ENCODE measurements at regions of chr19 and their contacts with region 1.

Region 1: DNA sequence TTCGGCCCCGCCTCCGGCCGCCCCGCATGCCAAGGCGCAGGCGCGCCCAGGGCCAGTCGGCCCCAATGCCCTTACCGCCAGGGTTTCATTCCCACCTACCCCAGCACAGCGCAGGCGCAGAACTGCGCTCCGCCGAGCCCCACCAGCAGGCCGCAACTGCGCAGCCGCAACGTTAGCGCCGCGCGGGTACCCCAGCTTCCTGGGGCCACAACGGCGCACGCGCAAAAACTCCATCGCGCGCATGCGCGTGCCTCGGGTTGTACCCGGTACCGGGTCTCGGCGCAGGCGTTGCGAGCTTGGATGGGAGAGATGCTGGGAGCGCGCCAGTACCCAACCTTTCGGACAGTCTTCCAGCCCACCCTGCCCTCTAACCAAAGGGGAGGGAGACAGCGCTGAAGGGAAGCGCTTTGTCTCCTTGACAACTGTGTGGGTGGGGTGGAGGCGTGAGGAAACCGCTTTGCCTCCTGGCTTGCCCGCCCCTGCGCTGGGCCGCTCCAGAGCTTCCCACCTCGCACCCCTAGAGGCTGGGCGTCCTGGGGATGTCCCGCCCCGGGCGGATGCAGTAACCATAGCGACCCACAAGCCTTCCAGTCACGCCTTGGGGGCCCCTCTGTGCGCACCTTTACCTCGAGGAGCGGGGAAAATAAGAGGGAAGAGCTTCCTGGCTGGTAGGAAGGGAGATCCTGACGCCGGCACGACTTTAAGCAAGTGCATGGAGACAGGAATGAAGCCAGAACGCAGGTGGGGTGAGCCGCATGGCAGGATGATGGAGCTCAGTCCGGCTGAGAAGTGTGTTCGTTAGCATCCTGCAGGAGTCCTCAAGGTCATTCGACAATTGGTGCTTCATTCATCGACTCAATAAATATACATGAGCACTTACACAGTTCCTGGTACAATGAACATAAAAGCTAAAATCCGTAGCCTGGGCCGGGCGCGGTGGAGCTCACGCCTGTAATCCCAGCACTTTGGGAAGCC is 525 bp upstream of the MYPOP start:
- H3K4me3 ChIP-seq: peak overlapping the region; percentile 75
- H3K27ac ChIP-seq: peak overlapping the region; percentile 63
- H3K4me1 ChIP-seq: peaks cover 9% of the 10 kb centered on the region; the same call in 1 of the 2 replicates
- CTCF ChIP-seq: peak; percentile 52

Region 2: DNA sequence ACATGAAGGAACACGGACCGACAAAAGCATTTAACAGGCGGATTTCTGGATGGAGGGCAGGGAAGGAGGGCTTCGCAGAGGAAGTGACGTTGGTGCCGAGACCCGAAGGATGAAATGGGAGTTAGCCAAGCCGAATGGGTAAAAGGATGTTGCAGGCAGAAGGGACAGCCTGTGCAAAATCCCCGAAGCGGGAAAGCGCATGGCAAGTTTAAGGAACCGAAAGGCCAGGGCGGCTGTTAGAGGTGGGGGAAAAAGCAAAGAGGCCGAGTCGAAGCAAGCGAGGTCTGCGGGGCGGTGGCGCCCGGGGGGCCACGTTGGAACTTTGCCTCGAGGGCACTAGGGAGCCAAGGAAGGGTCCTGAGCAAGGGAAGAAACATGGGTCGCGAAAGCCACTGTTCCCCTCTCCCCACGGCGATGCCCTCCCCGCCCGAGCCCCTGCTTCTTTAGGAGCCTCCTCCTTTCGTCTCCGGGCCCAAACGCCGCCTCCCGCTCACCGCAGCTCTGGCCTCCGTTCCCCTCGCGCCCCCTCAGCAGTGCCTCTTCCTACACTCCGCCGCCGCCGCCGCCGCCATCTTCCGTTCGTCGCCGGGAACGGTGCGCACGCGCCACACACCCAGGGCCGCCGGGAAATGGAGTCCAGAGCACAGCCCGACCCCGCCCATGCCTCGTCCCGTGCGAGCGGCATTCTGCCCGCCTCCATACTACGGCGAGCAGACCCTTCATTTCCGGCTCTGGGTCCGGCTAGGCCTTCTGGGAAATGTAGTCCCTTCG is 40.2 kb before region 1 on chr19 and contains the start of gene SYMPK:
- CTCF ChIA-PET with region 1: interaction called, 5 read pairs
- POLR2A ChIA-PET with region 1: interaction called, 25 read pairs
- H3K4me3 ChIP-seq: peak within 1 kb of the TSS; percentile 71
- H3K27ac ChIP-seq: peak within 1 kb of the TSS; percentile 83
- H3K4me1 ChIP-seq: peaks cover 10% of the 10 kb centered on the region
- CTCF ChIP-seq: no peak; the same call in 1 of the 2 replicates

Region 3: DNA sequence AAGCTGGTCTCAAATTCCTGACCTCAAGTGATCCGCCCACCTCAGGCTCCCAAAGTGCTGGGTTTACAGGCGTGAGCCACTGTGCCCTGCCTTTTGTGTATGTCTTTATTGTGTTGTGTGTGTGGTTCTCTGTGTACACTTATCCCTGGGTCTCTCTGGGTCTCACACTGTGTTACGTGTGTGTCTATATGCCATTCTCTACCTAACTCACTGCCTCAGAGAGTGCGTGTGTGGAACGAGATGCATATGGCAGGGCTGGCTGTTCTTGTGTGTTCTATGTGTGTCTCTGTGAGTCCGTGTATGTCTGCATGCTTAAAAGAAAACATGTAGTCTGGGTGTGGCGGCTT is 28.3 kb before region 1 on chr19:
- CTCF ChIA-PET with region 1: no interaction called
- POLR2A ChIA-PET with region 1: no interaction called
- H3K4me3 ChIP-seq: no peak overlapping the region
- H3K27ac ChIP-seq: no peak overlapping the region
- H3K4me1 ChIP-seq: no peaks in the 10 kb centered on the region
- CTCF ChIP-seq: no peak

Region 4: DNA sequence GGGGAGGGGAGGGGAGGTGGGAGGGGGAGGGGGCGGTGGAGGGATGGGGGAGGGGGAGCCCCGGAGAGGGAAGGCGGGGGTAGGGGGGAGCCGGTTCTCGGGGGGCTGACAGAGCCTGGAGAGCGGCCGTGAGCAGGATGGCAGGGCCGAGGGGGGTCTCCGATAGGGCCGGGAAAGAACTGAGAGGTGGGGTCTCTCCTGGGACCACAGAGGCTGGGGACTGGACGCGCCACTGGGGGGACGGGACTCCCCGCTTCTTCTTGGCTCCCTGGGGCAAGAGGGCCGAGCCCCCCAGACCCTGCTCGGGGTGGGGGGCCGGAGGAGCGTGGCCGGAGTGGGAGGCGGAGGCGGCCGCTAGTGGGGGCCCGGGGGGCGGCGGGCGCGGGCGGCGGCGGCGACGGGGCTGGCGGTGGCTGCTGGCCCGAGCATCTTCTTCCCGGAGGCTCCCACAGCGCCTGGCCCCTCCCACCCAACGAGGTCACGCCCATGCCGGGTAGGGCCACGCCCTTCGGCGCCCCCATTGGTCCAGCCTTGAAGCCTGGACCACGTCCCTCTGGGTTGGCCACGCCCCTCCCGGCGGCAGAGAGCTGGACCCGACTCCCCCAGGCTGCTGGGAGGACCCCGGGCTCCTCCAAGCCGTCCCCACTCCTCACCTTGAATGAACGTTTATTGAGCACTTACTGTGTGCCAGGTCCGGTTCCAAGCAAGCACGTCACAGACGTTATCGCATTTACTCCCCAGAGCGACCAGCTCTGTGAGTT is 70.8 kb after region 1 on chr19 and contains the start of gene NOVA2:
- CTCF ChIA-PET with region 1: no interaction called
- POLR2A ChIA-PET with region 1: no interaction called
- H3K4me3 ChIP-seq: peak within 1 kb of the TSS; percentile 49
- H3K27ac ChIP-seq: no peak within 1 kb of the TSS
- H3K4me1 ChIP-seq: no peaks in the 10 kb centered on the region
- CTCF ChIP-seq: no peak

Region 5: GRCh38 chr19:45994989-45995714 is 92.2 kb after region 1 on chr19 and contains the start of gene CCDC61:
- CTCF ChIA-PET with region 1: interaction called, 3 read pairs
- POLR2A ChIA-PET with region 1: interaction called, 18 read pairs
- H3K4me3 ChIP-seq: peak within 1 kb of the TSS; percentile 62
- H3K27ac ChIP-seq: no peak within 1 kb of the TSS; the same call in 1 of the 2 replicates
- H3K4me1 ChIP-seq: peaks cover 12% of the 10 kb centered on the region
- CTCF ChIP-seq: no peak

Region 6: DNA sequence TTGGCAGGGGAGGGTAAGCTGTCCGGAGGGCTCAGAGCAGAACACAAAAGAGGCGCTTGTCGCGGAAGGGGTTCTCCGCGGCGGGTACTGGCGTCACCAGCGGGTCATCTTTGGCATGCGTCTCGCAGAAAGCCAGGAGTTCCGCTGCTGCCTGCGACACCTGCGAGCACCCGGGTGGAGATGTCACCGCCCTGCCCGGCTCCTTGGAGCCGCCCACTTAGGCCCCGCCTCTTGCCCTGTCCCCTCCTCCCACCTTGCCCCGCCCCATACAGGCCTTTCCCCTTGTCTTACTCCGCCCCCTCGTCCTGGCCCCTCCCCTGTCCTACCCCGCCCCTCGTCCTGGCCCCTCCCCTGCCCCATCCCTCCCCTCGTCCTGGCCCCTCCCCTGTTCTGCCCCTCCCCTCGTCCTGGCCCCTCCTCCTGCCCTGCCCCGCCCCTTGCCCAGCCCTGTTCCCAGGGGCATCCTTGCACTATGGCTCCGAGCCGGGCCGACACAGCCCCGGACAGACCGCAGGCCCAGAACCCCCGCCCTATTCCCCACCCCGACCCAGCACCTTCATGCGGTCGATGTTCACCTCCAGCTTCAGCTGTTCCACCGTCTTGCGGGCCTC is 731.2 kb after region 1 on chr19:
- CTCF ChIA-PET with region 1: interaction called, 10 read pairs
- POLR2A ChIA-PET with region 1: no interaction called
- H3K4me3 ChIP-seq: peak overlapping the region; percentile 33
- H3K27ac ChIP-seq: no peak overlapping the region
- H3K4me1 ChIP-seq: peaks cover 3% of the 10 kb centered on the region; the same call in 1 of the 2 replicates
- CTCF ChIP-seq: no peak

Measured in HEK293 (cell line).